Naive thymus-derived CD8-positive, alpha-beta T cell (primary cell): ENCODE measurements at regions of chr3 and their contacts with region 1.

Region 1: GRCh38 chr3:25782938-25783660 is at the start of gene NGLY1:
- DNase-seq: peak; percentile 76 to 89 (median 82)
- ATAC-seq: peak; percentile 92
- H3K4me3 Mint-ChIP-seq: peak within 1 kb of the TSS; percentile 84 to 96 (median 94)
- H3K27ac Mint-ChIP-seq: peak within 1 kb of the TSS; percentile 70 to 95 (median 92)
- H3K4me1 Mint-ChIP-seq: peaks cover 10 to 45% (median 41%) of the 10 kb centered on the region in 4 donors
- H3K27me3 Mint-ChIP-seq: no peaks in the 10 kb centered on the region
- polyA plus RNA-seq, gene NGLY1: 33.4 to 52.0 (median 33.9) TPM

Region 2: GRCh38 chr3:25664810-25665314 is 118.2 kb before region 1 on chr3 and contains the start of gene TOP2B:
- POLR2A ChIA-PET with region 1: interaction called, 14 read pairs
- DNase-seq: peak; percentile 82 to 97 (median 94)
- ATAC-seq: peak; percentile 85 to 90
- H3K4me3 Mint-ChIP-seq: peak within 1 kb of the TSS; percentile 97 to 100 (median 99)
- H3K27ac Mint-ChIP-seq: peak within 1 kb of the TSS; percentile 98 to 100 (median 100)
- H3K4me1 Mint-ChIP-seq: peaks cover 25 to 59% (median 50%) of the 10 kb centered on the region in 4 donors
- H3K27me3 Mint-ChIP-seq: peaks cover 0 to 2% (median 0%) of the 10 kb centered on the region in 5 donors
- polyA plus RNA-seq, gene TOP2B: 65.7 to 122 (median 79.4) TPM